H1 (cell line): ENCODE measurements at regions of chr19 and their contacts with region 1.

Region 1: DNA sequence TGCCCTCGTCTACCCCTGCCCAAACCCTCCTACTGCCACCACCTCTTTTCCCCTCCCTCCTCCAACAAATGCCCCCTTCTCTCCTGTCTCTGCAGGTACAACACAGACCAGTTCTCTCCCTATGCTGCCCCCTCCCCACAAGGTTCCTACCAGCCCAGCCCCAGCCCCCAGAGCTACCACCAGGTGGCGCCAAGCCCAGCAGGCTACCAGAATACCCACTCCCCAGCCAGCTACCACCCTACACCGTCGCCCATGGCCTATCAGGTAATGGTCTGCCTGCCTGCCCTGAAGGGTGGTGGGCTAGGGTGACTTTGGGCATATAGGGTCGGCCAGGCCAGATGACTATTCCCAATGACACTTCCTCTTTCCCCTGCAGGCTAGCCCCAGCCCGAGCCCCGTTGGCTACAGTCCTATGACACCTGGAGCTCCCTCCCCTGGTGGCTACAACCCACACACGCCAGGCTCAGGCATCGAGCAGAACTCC is 6.5 kb upstream of the TIMM50 start:
- DNase-seq: peak in 1 of 2 experiments; percentile 96
- H3K4me3 ChIP-seq: no peak overlapping the region
- H3K27ac ChIP-seq: no peak overlapping the region
- H3K4me1 ChIP-seq: no peaks in the 10 kb centered on the region; a peak in 1 of 7 replicates
- H3K27me3 ChIP-seq: no peaks in the 10 kb centered on the region
- CTCF ChIP-seq: peak; percentile 89 to 96 (median 92)
- EP300 ChIP-seq: no peak
- POLR2A ChIP-seq: no peak
- RAD21 ChIP-seq: peak; percentile 61 to 72

Region 2: DNA sequence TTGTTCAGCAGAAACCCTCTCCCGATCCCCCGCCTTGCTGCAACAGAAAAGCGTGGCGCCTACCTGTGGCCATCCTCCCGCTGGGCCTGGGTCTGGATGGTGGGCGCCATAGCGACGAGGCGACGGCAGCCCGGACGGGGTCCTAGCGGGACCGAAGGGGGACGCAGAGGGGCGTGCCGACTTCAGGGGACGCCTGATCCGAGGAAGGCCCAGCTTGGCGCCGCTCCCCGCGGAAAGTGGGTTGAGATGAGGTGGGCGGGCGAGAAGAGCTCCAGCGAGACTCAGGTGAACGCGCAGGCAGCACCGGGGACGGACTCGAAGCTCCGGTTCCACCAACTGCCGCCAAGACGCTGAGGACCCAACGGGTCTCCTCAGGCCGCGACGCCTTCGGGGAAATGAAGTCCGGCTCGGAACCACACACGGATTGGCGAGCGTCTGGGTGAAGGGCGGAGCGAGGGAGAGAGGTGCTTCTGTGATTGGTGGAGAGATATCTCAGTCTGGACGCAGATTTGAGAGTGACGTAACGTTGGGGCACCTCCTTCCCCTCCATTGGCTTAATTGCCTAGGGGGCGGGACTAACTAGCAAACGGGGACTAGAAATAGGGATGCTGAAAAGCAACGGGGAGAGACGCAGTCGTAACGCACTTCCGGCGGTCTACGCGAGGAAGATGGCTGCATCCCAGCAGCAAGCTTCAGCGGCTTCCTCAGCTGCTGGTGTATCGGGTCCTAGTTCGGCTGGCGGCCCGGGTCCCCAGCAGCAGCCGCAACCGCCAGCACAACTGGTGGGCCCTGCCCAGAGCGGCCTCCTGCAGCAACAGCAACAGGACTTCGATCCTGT is 83.2 kb before region 1 on chr19 and contains the starts of genes MED29 and PAF1:
- CTCF ChIA-PET with region 1: no interaction called
- POLR2A ChIA-PET with region 1: interaction called, 11 read pairs
- DNase-seq: peak; percentile 91 to 99
- H3K4me3 ChIP-seq: peak within 1 kb of the TSS; percentile 91 to 97 (median 96)
- H3K27ac ChIP-seq: peak within 1 kb of the TSS; percentile 99
- H3K4me1 ChIP-seq: peaks cover 2 to 10% (median 7%) of the 10 kb centered on the region in 4 experiments
- H3K27me3 ChIP-seq: no peaks in the 10 kb centered on the region
- CTCF ChIP-seq: peak in 1 of 3 experiments; percentile 22; a peak in 2 of 4 replicates
- EP300 ChIP-seq: peak in 1 of 2 experiments; percentile 29; a peak in 1 of 3 replicates
- POLR2A ChIP-seq: peak; percentile 93 to 98
- RAD21 ChIP-seq: no peak
- total RNA-seq, gene MED29: 31.1 and 32.3 TPM in 2 replicates
- total RNA-seq, gene PAF1: 31.4 and 33.1 TPM in 2 replicates

Region 3: GRCh38 chr19:39428283-39429112 is 45.7 kb before region 1 on chr19:
- CTCF ChIA-PET with region 1: interaction called, 14 read pairs
- POLR2A ChIA-PET with region 1: interaction called, 1,154 read pairs
- DNase-seq: peak in 1 of 2 experiments; percentile 88
- H3K4me3 ChIP-seq: peak overlapping the region in 3 of 4 experiments; percentile 18 to 34 (median 32); a peak in 3 of 8 replicates
- H3K27ac ChIP-seq: peak overlapping the region; percentile 86
- H3K4me1 ChIP-seq: peaks cover 5 to 18% (median 13%) of the 10 kb centered on the region in 4 experiments
- H3K27me3 ChIP-seq: no peaks in the 10 kb centered on the region; a peak in 1 of 7 replicates
- CTCF ChIP-seq: no peak
- EP300 ChIP-seq: peak in 1 of 2 experiments; percentile 92; a peak in 1 of 3 replicates
- POLR2A ChIP-seq: peak; percentile 40 to 80; a peak in 2 of 3 replicates
- RAD21 ChIP-seq: peak in 1 of 2 experiments; percentile 3; a peak in 1 of 4 replicates

Region 4: GRCh38 chr19:39502640-39503417 is 28.6 kb after region 1 on chr19:
- CTCF ChIA-PET with region 1: interaction called, 47 read pairs
- POLR2A ChIA-PET with region 1: interaction called, 5 read pairs
- DNase-seq: peak in 1 of 2 experiments; percentile 93
- H3K4me3 ChIP-seq: peak overlapping the region in 1 of 4 experiments; percentile 37; a peak in 1 of 8 replicates
- H3K27ac ChIP-seq: no peak overlapping the region
- H3K4me1 ChIP-seq: peaks cover 3 to 10% (median 5%) of the 10 kb centered on the region in 4 experiments; a peak in 5 of 7 replicates
- H3K27me3 ChIP-seq: peaks cover 36 to 95% (median 85%) of the 10 kb centered on the region in 4 experiments
- CTCF ChIP-seq: peak; percentile 90 to 97 (median 93)
- EP300 ChIP-seq: no peak
- POLR2A ChIP-seq: no peak
- RAD21 ChIP-seq: peak in 1 of 2 experiments; percentile 56; a peak in 2 of 4 replicates

Region 5: GRCh38 chr19:39524495-39524894 is 50.3 kb after region 1 on chr19:
- CTCF ChIA-PET with region 1: interaction called, 50 read pairs
- POLR2A ChIA-PET with region 1: no interaction called
- DNase-seq: no peak
- H3K4me3 ChIP-seq: no peak overlapping the region
- H3K27ac ChIP-seq: no peak overlapping the region
- H3K4me1 ChIP-seq: peaks cover 0 to 2% (median 0%) of the 10 kb centered on the region in 4 experiments; a peak in 1 of 7 replicates
- H3K27me3 ChIP-seq: no peaks in the 10 kb centered on the region
- CTCF ChIP-seq: no peak
- EP300 ChIP-seq: no peak
- POLR2A ChIP-seq: no peak
- RAD21 ChIP-seq: no peak

Region 6: GRCh38 chr19:39576511-39576910 is 102.3 kb after region 1 on chr19:
- CTCF ChIA-PET with region 1: no interaction called
- POLR2A ChIA-PET with region 1: no interaction called
- DNase-seq: no peak
- H3K4me3 ChIP-seq: no peak overlapping the region
- H3K27ac ChIP-seq: no peak overlapping the region
- H3K4me1 ChIP-seq: no peaks in the 10 kb centered on the region
- H3K27me3 ChIP-seq: no peaks in the 10 kb centered on the region
- CTCF ChIP-seq: no peak
- EP300 ChIP-seq: no peak
- POLR2A ChIP-seq: no peak
- RAD21 ChIP-seq: no peak

Region 7: DNA sequence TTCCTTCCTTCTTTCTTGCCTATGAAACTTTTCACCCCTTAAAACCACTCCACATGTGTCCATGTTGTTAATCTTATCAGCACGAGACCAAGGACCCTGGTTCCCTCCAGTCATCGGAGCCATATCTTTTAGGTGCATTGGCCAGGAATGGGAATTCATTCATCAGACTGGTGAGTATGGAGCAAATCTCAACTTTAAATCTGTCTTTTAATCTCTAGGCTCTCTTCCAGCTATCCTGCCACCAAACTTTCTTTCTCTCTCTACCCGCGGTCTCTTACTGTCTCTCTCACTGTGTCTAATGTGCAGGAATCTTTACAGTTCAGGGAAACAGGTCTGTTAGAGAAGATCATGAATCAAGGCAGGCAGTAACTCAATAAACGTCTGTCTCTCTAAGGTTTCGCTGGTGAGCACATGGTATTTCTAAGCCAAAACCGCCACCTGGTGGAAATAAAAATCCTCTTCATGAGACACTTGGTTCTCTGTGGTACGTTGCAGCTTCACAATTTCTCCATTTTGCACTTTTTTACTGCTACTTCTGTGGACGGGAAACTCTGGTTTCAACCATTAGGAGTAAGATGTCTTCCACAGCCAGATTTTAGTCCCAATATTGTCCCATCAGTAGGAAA is 197.7 kb after region 1 on chr19:
- CTCF ChIA-PET with region 1: interaction called, 25 read pairs
- POLR2A ChIA-PET with region 1: interaction called, 5 read pairs
- DNase-seq: peak; percentile 15 to 50
- H3K4me3 ChIP-seq: no peak overlapping the region
- H3K27ac ChIP-seq: no peak overlapping the region
- H3K4me1 ChIP-seq: peaks cover 0 to 8% (median 2%) of the 10 kb centered on the region in 4 experiments; a peak in 2 of 7 replicates
- H3K27me3 ChIP-seq: no peaks in the 10 kb centered on the region
- CTCF ChIP-seq: peak in 2 of 3 experiments; percentile 74 to 88; a peak in 3 of 4 replicates
- EP300 ChIP-seq: no peak
- POLR2A ChIP-seq: no peak
- RAD21 ChIP-seq: peak; percentile 95 to 97